Activated CD8-positive, alpha-beta T cell treated with anti-CD3 and anti-CD28 coated beads, Interleukin-2, amount 10 ng/mL, durations not matched to agents 7 days and 5 days (primary cell): ENCODE measurements at regions of chr12 and their contacts with region 1.

Region 1: GRCh38 chr12:1093166-1093751 is 102.2 kb downstream of the ERC1 start:
- DNase-seq: peak; percentile 65
- ATAC-seq: peak; percentile 57
- H3K4me3 Mint-ChIP-seq: no peak overlapping the region
- H3K27ac Mint-ChIP-seq: no peak overlapping the region
- H3K4me1 Mint-ChIP-seq: peaks cover 1% of the 10 kb centered on the region
- H3K27me3 Mint-ChIP-seq: no peaks in the 10 kb centered on the region

Region 2: GRCh38 chr12:949453-950191 is 143.6 kb before region 1 on chr12 and contains the start of gene RAD52:
- CTCF ChIA-PET with region 1: interaction called, 17 read pairs
- POLR2A ChIA-PET with region 1: no interaction called
- DNase-seq: peak; percentile 98
- ATAC-seq: peak; percentile 89
- H3K4me3 Mint-ChIP-seq: peak within 1 kb of the TSS; percentile 91
- H3K27ac Mint-ChIP-seq: peak within 1 kb of the TSS; percentile 81
- H3K4me1 Mint-ChIP-seq: peaks cover 39% of the 10 kb centered on the region
- H3K27me3 Mint-ChIP-seq: peaks cover 4% of the 10 kb centered on the region
- total RNA-seq, gene RAD52: 19.3 to 20.9 TPM

Region 3: DNA sequence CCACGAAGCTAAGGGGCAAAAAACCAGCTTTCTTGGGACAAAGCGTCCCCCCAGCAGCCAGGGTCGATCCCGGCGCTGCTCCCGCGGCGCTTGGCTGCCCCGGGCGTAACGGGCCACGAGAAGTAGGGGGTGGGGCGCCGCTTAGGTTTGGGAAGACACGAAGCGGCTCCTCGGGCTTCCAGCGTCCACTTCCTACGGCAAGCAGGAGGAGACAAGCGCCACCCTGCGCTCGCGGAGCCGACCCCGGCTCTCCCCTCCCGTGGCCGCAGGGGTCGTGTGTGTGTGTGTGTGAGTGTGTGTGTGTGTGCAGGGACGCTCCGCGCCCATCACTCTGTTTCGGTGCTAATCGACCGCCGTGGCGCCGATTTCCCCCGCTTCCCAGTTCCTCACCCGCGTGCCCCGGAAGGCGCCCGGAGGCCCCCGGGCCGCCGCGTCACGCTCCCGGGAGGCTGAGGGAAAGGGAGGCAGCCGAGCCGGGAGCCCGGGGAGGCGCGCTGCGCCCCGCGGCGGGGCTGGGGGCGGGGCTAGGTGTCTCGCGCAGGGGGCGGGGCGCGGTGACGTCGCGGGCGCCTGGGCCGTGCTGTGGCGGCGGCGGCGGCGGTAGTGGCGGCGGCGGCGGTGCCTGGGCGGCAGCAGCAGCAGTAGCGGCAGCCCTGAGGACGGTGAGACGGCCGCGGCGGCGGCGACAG is 102.5 kb before region 1 on chr12 and contains the start of gene ERC1:
- CTCF ChIA-PET with region 1: interaction called, 14 read pairs
- POLR2A ChIA-PET with region 1: no interaction called
- DNase-seq: peak; percentile 79
- ATAC-seq: peak; percentile 82
- H3K4me3 Mint-ChIP-seq: peak within 1 kb of the TSS; percentile 89
- H3K27ac Mint-ChIP-seq: peak within 1 kb of the TSS; percentile 91
- H3K4me1 Mint-ChIP-seq: peaks cover 35% of the 10 kb centered on the region
- H3K27me3 Mint-ChIP-seq: peaks cover 3% of the 10 kb centered on the region
- total RNA-seq, gene ERC1: 25.2 to 32.9 TPM

Region 4: DNA sequence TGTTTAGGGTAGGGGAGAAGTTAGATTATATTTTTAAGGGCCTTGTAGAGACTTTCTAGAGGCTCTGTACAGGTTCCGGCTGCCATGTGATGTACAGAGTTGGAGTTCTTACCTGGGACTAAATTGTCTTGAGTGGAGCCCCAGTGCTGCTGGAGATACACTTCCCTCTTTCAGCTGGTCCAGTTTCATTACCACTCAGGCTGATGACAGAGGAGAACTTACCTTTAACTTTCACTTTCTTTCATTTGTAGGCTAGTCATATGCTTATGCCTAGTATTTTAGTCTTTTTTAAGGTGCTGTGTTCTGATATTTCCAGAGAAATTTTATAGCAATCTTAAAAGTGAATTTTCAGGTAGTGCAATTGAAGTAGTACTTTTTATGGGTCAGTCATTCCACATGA is 15.0 kb after region 1 on chr12:
- CTCF ChIA-PET with region 1: interaction called, 23 read pairs
- POLR2A ChIA-PET with region 1: no interaction called
- DNase-seq: no peak
- ATAC-seq: peak; percentile 70
- H3K4me3 Mint-ChIP-seq: no peak overlapping the region
- H3K27ac Mint-ChIP-seq: no peak overlapping the region
- H3K4me1 Mint-ChIP-seq: peaks cover 30% of the 10 kb centered on the region
- H3K27me3 Mint-ChIP-seq: no peaks in the 10 kb centered on the region